Right ventricle myocardium superior (tissue), 1 donor: ENCODE measurements at regions of chr7 and their contacts with region 1.

Region 1: DNA sequence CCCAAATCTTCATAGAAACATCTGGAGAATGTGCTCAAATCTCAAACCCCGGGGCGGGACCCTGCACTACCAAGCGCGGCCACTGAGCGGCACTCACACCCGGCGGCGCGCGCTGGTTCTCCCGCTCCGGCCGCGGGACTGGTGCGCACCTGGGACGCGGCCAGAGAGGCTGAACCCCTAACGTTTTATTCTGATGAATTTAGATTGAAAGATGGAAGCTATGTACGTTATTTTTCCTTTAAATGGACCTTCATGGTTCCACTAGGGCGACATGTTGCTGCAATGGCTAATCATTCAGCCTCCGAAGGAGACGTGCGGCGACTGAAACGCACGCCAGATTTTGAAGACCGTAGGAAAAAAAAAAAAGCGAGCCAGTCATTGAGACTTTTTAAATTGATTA is 107.0 kb upstream of the INSIG1 start:
- DNase-seq: peak; percentile 76
- ATAC-seq: peak; percentile 70

Region 2: GRCh38 chr7:154927624-154928143 is 263.0 kb before region 1 on chr7:
- intact Hi-C with region 1: loop called (anchors 10 kb)
- DNase-seq: no peak
- ATAC-seq: peak; percentile 94

Region 3: GRCh38 chr7:155053002-155053401 is 137.7 kb before region 1 on chr7:
- intact Hi-C with region 1: no loop called
- DNase-seq: no peak
- ATAC-seq: no peak

Region 4: GRCh38 chr7:155344600-155345433 is 154.1 kb after region 1 on chr7:
- intact Hi-C with region 1: loop called (anchors 2 kb)
- DNase-seq: peak; percentile 88
- ATAC-seq: peak; percentile 99